ENCODE measurements at regions of chr19 and their contacts with region 1.

Region 1: DNA sequence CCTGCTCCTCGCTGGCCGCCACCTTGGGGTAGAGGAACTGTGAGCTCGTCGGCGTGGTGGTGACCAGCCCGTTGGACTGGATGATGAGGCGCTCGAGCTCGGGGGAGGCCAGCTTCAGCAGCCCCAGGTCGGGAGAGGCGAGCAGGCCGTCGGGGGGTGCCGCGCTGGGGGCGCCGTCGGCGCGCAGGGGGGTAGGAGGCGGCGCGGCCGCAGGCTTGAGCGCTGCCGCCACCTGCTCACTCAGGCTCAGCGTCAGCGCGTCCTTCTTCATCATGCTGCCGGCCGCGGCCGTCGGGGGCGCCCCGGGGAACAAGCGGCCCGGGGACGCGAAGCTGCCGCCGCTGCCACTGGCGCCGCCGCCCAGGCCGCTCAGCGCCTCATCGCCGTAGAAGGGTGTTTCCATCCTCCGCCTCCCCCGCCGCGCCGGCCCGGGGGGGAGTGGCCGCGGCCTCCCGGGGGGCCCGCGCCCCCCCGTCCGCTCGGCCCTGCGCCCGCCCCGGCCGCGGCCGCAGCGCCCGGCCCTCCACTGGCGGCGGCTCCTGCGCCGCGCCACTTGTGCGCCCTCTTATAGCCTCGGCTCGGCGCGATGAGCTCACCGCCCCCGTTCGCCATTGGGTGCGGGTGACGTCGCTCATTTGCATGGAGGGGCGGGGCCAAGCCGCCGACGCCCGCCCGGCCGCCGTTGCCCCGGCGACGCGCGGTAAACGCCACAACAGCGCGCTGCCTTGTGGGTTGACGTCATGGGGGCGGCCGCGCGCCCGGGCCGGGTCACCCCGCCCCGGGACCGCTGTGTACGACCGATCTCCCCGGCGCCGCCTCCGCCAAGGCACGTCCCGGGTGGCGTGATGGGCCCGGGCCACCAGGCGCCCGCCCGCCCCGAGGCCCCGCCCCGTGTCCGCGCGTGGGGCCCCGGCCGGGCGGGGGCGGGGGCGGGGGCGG is at the start of gene JUND:
- H3K4me3 ChIP-seq: peak within 1 kb of the TSS; percentile 88
- H3K27ac ChIP-seq: peak within 1 kb of the TSS; percentile 98
- H3K4me1 ChIP-seq: no peaks in the 10 kb centered on the region
- CTCF ChIP-seq: peak; percentile 20

Region 2: GRCh38 chr19:18203863-18204393 is 77.4 kb before region 1 on chr19 and contains the start of gene RAB3A:
- CTCF ChIA-PET with region 1: interaction called, 10 read pairs
- POLR2A ChIA-PET with region 1: interaction called, 30 read pairs
- H3K4me3 ChIP-seq: peak within 1 kb of the TSS; percentile 70
- H3K27ac ChIP-seq: peak within 1 kb of the TSS; percentile 60
- H3K4me1 ChIP-seq: peaks cover 8% of the 10 kb centered on the region
- CTCF ChIP-seq: peak; percentile 87

Region 3: DNA sequence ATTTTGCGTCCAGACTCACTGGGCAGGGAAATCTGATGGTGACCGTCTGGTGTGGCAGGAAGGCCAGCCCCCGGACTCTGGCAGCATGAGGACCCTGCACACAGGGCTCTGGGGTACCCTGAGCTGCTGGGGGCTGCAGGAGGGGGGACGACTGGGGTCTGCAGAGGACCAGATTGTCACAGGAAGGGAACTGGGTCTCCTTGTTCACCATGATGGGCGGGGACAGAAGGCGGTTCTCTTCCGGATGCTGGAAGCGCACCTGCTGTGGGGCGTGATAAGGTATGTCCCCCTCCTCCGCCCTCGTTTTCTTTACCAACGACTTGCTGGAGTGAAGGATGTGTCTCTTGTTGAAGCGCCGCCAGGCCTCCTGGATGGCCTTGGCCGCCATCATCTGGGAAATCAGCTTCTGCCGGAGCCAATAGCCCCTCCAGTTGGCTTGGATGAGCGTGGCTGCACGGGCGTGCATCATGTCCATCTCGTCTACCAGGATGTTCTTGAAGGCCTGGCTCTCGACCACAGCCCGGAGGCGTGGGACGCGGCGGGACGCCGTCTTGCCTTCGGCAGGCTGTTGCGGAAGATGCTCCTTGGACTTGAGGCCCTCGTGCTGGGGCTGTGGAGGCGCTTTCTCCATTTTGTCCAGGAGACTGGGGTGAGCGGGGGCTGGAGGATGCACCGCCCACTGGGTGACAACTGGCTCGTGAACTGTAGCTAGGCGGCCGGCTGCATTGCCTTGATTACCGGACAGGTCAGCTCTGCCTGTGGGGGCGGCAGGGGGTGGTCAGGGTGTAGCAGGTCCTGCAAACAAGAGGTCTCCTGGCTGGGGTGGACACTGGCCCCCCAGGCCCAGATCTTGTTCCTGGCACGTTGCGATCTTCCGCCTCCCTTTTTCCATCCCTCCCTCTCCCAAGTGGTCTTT is 14.3 kb before region 1 on chr19:
- CTCF ChIA-PET with region 1: interaction called, 19 read pairs
- POLR2A ChIA-PET with region 1: interaction called, 6 read pairs
- H3K4me3 ChIP-seq: no peak overlapping the region
- H3K27ac ChIP-seq: no peak overlapping the region
- H3K4me1 ChIP-seq: no peaks in the 10 kb centered on the region
- CTCF ChIP-seq: no peak

Region 4: DNA sequence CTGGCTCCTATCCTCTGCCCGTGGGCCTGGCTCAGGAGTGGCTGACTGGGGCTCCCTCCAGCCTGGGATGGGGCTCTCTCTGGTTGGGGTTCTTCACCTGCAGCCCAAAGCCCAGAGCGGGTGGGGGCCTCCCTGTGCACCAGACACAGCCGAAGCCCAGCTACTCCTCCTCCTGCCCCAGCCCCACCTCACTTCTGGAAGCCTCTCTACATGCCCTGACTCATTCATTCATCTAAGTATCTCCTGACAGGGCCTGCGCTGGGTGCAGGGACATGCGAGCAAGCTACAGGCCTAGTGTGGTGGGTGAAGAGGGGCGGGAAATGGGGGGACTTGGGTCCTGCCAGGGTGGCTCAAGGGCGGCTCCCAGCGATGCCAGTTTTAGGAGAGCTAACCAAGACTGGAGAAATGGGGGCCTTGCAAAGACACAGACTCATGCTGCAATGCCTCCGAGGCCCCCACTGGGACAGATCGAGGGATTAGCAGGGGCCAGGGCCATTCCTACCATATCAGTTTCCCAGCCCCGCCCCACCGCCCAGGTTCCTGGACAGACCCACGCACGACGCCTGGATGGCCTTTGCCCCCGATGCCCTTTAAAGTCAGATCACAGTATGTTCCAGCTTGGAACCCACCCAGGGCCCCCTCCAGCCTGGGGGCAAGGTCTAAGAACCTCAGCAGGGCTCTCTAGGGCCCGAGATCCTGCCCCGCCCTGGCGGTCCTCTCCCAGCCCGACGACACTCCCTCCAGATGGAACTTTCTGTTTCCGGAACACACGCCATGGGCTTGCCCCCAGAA is 29.0 kb after region 1 on chr19:
- CTCF ChIA-PET with region 1: interaction called, 41 read pairs
- POLR2A ChIA-PET with region 1: interaction called, 49 read pairs
- H3K4me3 ChIP-seq: no peak overlapping the region
- H3K27ac ChIP-seq: no peak overlapping the region
- H3K4me1 ChIP-seq: no peaks in the 10 kb centered on the region
- CTCF ChIP-seq: no peak

Region 5: GRCh38 chr19:18340190-18340989 is 59.0 kb after region 1 on chr19 and contains the start of gene PGPEP1:
- CTCF ChIA-PET with region 1: interaction called, 25 read pairs
- POLR2A ChIA-PET with region 1: interaction called, 37 read pairs
- H3K4me3 ChIP-seq: peak within 1 kb of the TSS; percentile 90
- H3K27ac ChIP-seq: no peak within 1 kb of the TSS
- H3K4me1 ChIP-seq: no peaks in the 10 kb centered on the region
- CTCF ChIP-seq: no peak

Region 6: DNA sequence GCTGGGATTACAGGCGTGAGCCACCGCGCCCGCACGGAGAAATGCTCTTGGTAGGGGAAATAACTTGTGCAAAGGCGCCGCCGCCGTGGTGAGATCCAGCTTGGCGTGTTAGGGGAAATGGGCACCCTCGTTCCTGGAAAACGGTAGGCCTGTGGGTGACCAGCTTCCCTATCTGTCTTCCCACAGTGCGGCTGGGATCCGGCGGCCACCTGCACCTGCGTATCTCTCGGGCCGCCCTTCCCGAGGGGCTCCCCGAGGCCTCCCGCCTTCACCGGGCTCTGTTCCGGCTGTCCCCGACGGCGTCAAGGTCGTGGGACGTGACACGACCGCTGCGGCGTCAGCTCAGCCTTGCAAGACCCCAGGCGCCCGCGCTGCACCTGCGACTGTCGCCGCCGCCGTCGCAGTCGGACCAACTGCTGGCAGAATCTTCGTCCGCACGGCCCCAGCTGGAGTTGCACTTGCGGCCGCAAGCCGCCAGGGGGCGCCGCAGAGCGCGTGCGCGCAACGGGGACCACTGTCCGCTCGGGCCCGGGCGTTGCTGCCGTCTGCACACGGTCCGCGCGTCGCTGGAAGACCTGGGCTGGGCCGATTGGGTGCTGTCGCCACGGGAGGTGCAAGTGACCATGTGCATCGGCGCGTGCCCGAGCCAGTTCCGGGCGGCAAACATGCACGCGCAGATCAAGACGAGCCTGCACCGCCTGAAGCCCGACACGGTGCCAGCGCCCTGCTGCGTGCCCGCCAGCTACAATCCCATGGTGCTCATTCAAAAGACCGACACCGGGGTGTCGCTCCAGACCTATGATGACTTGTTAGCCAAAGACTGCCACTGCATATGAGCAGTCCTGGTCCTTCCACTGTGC is 107.0 kb after region 1 on chr19:
- CTCF ChIA-PET with region 1: interaction called, 21 read pairs
- POLR2A ChIA-PET with region 1: interaction called, 5 read pairs
- H3K4me3 ChIP-seq: no peak overlapping the region; the same call in 1 of the 2 replicates
- H3K27ac ChIP-seq: no peak overlapping the region
- H3K4me1 ChIP-seq: no peaks in the 10 kb centered on the region
- CTCF ChIP-seq: peak; percentile 99

Measured in HEK293 (cell line).